ENCODE measurements at regions of chr17 and their contacts with region 1.

Region 1: DNA sequence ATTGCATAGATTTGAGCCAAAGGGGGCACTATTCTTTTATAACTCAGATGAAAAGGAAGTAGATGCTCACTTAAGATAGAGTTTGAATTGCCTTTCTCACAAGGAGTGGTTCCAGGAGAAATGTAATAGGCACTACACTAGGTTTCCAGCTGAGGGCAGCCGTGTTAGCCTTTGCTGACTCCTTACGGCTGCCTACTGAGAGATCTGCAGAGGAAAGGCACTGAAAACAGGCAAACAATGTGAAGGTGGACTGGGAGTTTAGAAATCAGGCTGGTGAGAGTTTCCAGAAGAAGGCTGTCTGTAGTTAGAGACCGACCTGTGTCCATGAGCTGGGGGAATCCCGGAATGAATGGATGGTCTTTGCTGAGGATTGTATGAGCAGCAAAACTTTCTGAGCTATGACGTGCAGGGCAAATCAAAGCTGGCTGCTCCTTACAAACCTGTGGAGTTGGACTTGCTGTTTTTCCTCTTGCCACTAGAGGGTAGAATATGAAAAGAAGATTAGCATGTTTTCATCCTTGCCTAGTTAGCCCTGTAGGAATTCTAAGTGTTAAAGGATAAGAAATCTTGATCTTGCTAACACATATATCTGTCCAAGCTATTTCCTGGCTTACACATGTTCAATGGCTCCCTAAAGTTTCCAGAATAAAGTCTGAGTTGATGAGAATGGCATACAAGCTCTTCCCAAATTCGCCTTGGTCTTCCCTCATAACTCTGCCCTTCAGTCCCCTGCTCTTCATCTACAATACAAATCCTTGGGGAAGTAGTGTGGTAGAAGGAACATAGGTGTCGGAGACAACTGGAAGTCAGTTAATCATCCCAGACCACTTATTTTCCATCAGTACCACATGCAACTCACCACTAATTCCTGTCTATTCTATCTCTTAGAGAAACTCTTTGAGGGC is 20.1 kb upstream of the TAOK1 start:
- DNase-seq: peak; percentile 16 to 49
- ATAC-seq: peak; percentile 87 to 96 (median 94)
- H3K4me3 ChIP-seq: peak overlapping the region in 6 of 10 donors; percentile 11 to 36 (median 20)
- H3K27ac ChIP-seq: peak overlapping the region in 9 of 10 donors; percentile 15 to 79 (median 47)
- H3K4me1 ChIP-seq: peaks cover 0 to 20% (median 11%) of the 10 kb centered on the region in 9 donors
- H3K27me3 ChIP-seq: no peaks in the 10 kb centered on the region
- CTCF ChIP-seq: peak; percentile 61 to 82 (median 77)

Region 2: GRCh38 chr17:29389982-29390850 is 20.1 kb after region 1 on chr17 and contains the start of gene TAOK1:
- intact Hi-C with region 1: no loop called
- DNase-seq: peak; percentile 99 to 100
- ATAC-seq: peak; percentile 98 to 100 (median 99)
- H3K4me3 ChIP-seq: peak within 1 kb of the TSS; percentile 73 to 99 (median 88)
- H3K27ac ChIP-seq: peak within 1 kb of the TSS; percentile 96 to 99 (median 98)
- H3K4me1 ChIP-seq: peaks cover 4 to 53% (median 32%) of the 10 kb centered on the region in 9 donors
- H3K27me3 ChIP-seq: no peaks in the 10 kb centered on the region
- CTCF ChIP-seq: no peak
- total RNA-seq, gene TAOK1: 49.6 to 86.9 (median 70.7) TPM

Region 3: DNA sequence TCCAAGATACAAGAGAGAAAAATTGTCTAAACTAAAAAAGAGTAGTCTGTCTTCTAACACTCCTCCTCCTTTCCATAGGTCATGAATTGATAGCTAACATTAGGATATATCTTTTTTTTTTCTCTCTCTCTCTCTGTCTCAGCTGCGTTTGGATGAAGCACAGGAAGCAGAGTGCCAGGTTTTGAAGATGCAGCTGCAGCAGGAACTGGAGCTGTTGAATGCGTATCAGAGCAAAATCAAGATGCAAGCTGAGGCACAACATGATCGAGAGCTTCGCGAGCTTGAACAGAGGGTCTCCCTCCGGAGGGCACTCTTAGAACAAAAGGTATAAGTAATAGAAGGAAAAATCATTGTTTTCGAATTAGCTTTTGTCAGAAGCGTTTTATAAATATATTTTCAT is 163.9 kb after region 1 on chr17:
- intact Hi-C with region 1: loop called (anchors 1 to 5 kb)
- DNase-seq: no peak
- ATAC-seq: no peak
- H3K4me3 ChIP-seq: no peak overlapping the region
- H3K27ac ChIP-seq: no peak overlapping the region
- H3K4me1 ChIP-seq: no peaks in the 10 kb centered on the region
- H3K27me3 ChIP-seq: no peaks in the 10 kb centered on the region
- CTCF ChIP-seq: no peak

Measured in heart right ventricle (tissue), 16 donors.